ENCODE measurements at regions of chr15 and their contacts with region 1.

Region 1: GRCh38 chr15:90869601-90870353 is 1.4 kb downstream of the FURIN start:
- DNase-seq: peak; percentile 83 to 92 (median 87)
- ATAC-seq: peak; percentile 80 to 93 (median 86)
- H3K4me3 ChIP-seq: peak overlapping the region in 10 of 12 donors; percentile 80 to 96 (median 89)
- H3K27ac ChIP-seq: peak overlapping the region; percentile 91 to 100 (median 98)
- H3K4me1 ChIP-seq: peaks cover 16 to 62% (median 46%) of the 10 kb centered on the region in 12 donors
- H3K27me3 ChIP-seq: no peaks in the 10 kb centered on the region
- CTCF ChIP-seq: no peak
- POLR2A ChIP-seq: no peak

Region 2: GRCh38 chr15:90165659-90166421 is 703.9 kb before region 1 on chr15:
- intact Hi-C with region 1: no loop called
- DNase-seq: peak in 4 of 5 donors; percentile 23 to 74 (median 64)
- ATAC-seq: peak; percentile 36 to 89 (median 82)
- H3K4me3 ChIP-seq: no peak overlapping the region
- H3K27ac ChIP-seq: peak overlapping the region in 7 of 12 donors; percentile 10 to 82 (median 57)
- H3K4me1 ChIP-seq: peaks cover 0 to 27% (median 0%) of the 10 kb centered on the region in 12 donors
- H3K27me3 ChIP-seq: no peaks in the 10 kb centered on the region
- CTCF ChIP-seq: no peak
- POLR2A ChIP-seq: no peak

Region 3: GRCh38 chr15:90706394-90707327 is 163.1 kb before region 1 on chr15:
- intact Hi-C with region 1: loop called in 1 of 10 experiments (anchors 5 kb)
- DNase-seq: peak in 1 of 5 donors; percentile 29
- ATAC-seq: peak in 2 of 4 donors; percentile 34 to 55
- H3K4me3 ChIP-seq: no peak overlapping the region
- H3K27ac ChIP-seq: no peak overlapping the region
- H3K4me1 ChIP-seq: peaks cover 0 to 6% (median 0%) of the 10 kb centered on the region in 12 donors
- H3K27me3 ChIP-seq: no peaks in the 10 kb centered on the region
- CTCF ChIP-seq: no peak
- POLR2A ChIP-seq: no peak

Region 4: DNA sequence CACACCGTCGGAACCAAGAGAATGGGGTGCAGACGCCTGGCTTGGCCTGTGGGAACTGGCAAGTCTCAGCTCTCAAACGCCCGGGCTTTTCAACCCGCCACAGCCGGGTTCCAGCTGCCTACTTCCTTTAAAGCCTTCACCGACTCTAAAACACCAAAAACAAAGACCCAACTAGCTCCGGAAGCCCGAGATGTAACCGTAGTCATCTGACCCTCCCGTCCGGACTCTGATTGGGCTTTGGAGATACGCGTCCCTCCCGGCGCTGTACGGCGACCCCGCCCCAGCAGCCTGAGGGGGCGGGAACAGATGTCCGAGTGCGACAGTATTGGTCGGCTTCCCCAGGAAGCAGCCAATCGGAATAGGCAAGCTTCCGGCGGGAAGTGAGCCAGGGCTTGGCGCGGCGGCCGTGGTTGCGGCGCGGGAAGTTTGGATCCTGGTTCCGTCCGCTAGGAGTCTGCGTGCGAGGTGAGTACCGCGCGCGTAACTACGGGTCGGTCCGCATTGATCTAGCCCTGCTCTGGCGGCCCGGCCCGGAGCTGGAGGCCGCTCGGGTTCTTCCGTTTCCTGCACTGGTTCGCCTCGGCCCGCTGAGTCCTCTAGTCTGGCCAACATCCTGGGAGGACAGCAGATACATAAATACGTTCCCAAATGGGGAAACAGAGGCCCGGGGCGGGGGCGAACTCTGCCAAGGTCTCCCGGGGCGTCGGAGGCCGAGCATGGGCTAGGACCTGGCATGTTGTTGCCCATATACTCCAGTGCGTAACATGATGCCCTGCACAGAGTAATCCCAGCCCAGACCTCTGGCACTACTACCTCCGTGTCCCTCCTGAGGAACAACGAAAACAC is 152.6 kb before region 1 on chr15 and contains the start of gene BLM:
- intact Hi-C with region 1: loop called in 3 of 10 experiments (anchors 5 to 10 kb)
- DNase-seq: peak; percentile 95 to 98 (median 96)
- ATAC-seq: peak; percentile 100
- H3K4me3 ChIP-seq: peak within 1 kb of the TSS; percentile 9 to 83 (median 66)
- H3K27ac ChIP-seq: peak within 1 kb of the TSS; percentile 68 to 97 (median 88)
- H3K4me1 ChIP-seq: peaks cover 0 to 25% (median 10%) of the 10 kb centered on the region in 12 donors
- H3K27me3 ChIP-seq: no peaks in the 10 kb centered on the region
- CTCF ChIP-seq: peak in 11 of 12 donors; percentile 18 to 54 (median 39)
- POLR2A ChIP-seq: peak in 1 of 2 donors; percentile 78
- total RNA-seq, gene BLM: 4.3 to 39.6 (median 12.2) TPM

Region 5: DNA sequence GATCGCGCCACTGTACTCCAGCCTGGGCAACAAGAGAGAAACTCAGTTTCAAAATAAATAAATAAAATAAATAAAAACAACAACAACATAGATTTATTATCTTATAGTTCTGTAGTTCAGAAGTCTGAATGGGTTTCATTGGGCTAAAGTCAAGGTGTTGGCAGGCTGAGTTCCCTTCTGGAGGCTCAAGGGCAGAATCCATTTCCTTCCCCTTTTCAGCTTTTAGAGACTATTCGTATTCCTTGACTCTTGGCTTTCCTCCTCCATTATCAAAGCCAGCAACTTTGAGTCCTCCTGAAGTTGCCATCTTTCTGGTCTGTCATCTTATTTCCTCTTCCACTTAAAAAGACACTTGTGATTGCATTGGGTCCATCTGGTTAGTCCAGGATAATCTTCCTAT is 140.5 kb before region 1 on chr15:
- intact Hi-C with region 1: loop called in 1 of 10 experiments (anchors 10 kb)
- DNase-seq: no peak
- ATAC-seq: no peak
- H3K4me3 ChIP-seq: no peak overlapping the region
- H3K27ac ChIP-seq: no peak overlapping the region
- H3K4me1 ChIP-seq: peaks cover 0 to 8% (median 0%) of the 10 kb centered on the region in 12 donors
- H3K27me3 ChIP-seq: no peaks in the 10 kb centered on the region
- CTCF ChIP-seq: no peak
- POLR2A ChIP-seq: no peak

Region 6: DNA sequence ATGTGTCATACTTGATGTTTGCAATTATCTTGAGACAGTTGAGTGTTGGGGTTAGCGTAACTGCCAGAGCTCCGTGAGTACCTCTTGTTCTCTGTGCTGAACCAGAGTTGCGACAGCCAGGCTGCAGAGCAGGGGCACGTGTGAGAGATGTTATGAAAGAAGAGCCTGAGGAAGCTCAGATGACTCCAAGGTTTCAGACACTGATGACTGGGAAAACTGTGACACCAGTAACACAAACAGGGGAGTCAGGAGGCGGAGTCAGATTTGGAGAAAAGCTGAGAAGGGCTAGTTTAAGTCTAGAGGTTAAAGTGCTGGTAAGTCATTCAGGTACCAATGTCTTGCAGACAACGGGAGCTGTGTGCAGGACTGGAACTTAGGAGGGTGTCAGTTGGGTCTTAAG is 107.7 kb before region 1 on chr15:
- intact Hi-C with region 1: loop called in 1 of 10 experiments (anchors 10 kb)
- DNase-seq: peak; percentile 33 to 93 (median 77)
- ATAC-seq: peak; percentile 96 to 99 (median 98)
- H3K4me3 ChIP-seq: peak overlapping the region in 5 of 12 donors; percentile 1 to 21 (median 14)
- H3K27ac ChIP-seq: peak overlapping the region; percentile 51 to 92 (median 76)
- H3K4me1 ChIP-seq: peaks cover 0 to 39% (median 10%) of the 10 kb centered on the region in 12 donors
- H3K27me3 ChIP-seq: no peaks in the 10 kb centered on the region
- CTCF ChIP-seq: no peak
- POLR2A ChIP-seq: peak in 1 of 2 donors; percentile 25

Region 7: GRCh38 chr15:90774731-90775484 is 94.9 kb before region 1 on chr15:
- intact Hi-C with region 1: no loop called
- DNase-seq: no peak
- ATAC-seq: no peak
- H3K4me3 ChIP-seq: no peak overlapping the region
- H3K27ac ChIP-seq: no peak overlapping the region
- H3K4me1 ChIP-seq: peaks cover 0 to 8% (median 0%) of the 10 kb centered on the region in 12 donors
- H3K27me3 ChIP-seq: no peaks in the 10 kb centered on the region
- CTCF ChIP-seq: no peak
- POLR2A ChIP-seq: no peak

Region 8: GRCh38 chr15:90818251-90819210 is 51.2 kb before region 1 on chr15:
- intact Hi-C with region 1: loop called in 2 of 10 experiments (anchors 5 kb)
- DNase-seq: peak in 2 of 5 donors; percentile 65 to 75
- ATAC-seq: peak in 3 of 4 donors; percentile 21 to 38 (median 36)
- H3K4me3 ChIP-seq: no peak overlapping the region
- H3K27ac ChIP-seq: peak overlapping the region in 3 of 12 donors; percentile 38 to 66 (median 55)
- H3K4me1 ChIP-seq: peaks cover 0 to 37% (median 11%) of the 10 kb centered on the region in 12 donors
- H3K27me3 ChIP-seq: no peaks in the 10 kb centered on the region
- CTCF ChIP-seq: peak in 3 of 12 donors; percentile 12 to 24 (median 23)
- POLR2A ChIP-seq: no peak

Region 9: GRCh38 chr15:90931737-90932659 is 62.2 kb after region 1 on chr15 and contains the start of gene HDDC3:
- intact Hi-C with region 1: loop called in 2 of 10 experiments (anchors 5 kb)
- DNase-seq: peak; percentile 90 to 96 (median 93)
- ATAC-seq: peak; percentile 42 to 66 (median 65)
- H3K4me3 ChIP-seq: peak within 1 kb of the TSS; percentile 48 to 95 (median 86)
- H3K27ac ChIP-seq: peak within 1 kb of the TSS; percentile 89 to 97 (median 96)
- H3K4me1 ChIP-seq: peaks cover 11 to 67% (median 47%) of the 10 kb centered on the region in 12 donors
- H3K27me3 ChIP-seq: no peaks in the 10 kb centered on the region
- CTCF ChIP-seq: peak; percentile 94 to 99 (median 97)
- POLR2A ChIP-seq: peak in 1 of 2 donors; percentile 28
- total RNA-seq, gene HDDC3: 10.9 to 19.9 (median 15.2) TPM

Region 10: DNA sequence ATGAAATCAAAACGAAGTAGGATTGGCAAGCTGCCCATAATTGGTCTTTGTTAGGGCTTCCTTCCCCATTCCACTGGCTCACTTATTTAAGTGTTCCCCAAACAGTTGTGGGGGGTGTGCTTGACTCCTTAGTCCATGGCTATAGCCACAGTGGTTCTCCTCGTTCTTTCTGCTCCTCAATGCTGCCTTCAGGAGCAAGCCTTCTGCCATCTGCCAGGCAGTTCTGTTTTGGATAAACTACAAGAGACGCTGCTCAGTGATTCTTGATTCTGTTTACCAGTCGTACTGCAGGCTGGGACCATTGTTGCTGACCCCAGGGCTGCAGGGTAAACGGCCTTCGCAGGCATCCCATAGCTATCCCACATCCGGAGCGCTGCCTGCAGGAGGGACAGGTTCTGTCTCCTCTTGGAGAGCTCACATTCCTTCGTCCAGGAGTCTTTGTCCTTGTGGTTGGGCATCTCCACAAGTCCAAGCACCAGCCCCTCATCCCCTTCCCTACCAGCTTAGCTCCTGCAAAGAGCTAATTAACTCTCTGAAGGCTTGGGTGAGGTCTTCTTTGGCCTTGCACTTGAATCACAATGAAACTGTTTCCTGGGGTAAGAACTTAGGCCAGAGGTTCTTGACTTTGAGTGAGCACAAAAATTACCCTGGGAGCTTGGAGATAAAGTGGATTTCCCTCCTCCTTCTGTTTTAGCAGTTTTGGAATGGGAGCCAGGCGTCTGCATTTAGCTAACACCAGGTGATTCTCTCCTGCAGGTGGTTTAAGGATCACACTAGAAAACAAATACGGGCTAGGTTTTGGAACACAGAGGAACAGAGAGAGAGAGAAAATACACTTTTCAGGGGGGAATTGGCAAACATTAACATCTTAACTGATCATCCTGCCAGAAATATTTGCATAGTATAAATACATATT is 345.2 kb after region 1 on chr15:
- intact Hi-C with region 1: no loop called
- DNase-seq: no peak
- ATAC-seq: no peak
- H3K4me3 ChIP-seq: no peak overlapping the region
- H3K27ac ChIP-seq: no peak overlapping the region
- H3K4me1 ChIP-seq: peaks cover 0 to 10% (median 0%) of the 10 kb centered on the region in 12 donors
- H3K27me3 ChIP-seq: peaks cover 0 to 3% (median 0%) of the 10 kb centered on the region in 9 donors
- CTCF ChIP-seq: no peak
- POLR2A ChIP-seq: no peak

Measured in heart left ventricle (tissue), 16 donors.